Activated CD8-positive, alpha-beta T cell treated with anti-CD3 and anti-CD28 coated beads for 36 hours (primary cell): ENCODE measurements at regions of chr22 and their contacts with region 1.

Region 1: GRCh38 chr22:23281406-23282088 is 101.2 kb downstream of the BCR start:
- DNase-seq: peak; percentile 89
- ATAC-seq: peak; percentile 86
- H3K4me3 Mint-ChIP-seq: no peak overlapping the region
- H3K27ac Mint-ChIP-seq: no peak overlapping the region
- H3K4me1 Mint-ChIP-seq: peaks cover 32% of the 10 kb centered on the region
- H3K27me3 Mint-ChIP-seq: no peaks in the 10 kb centered on the region
- CTCF ChIP-seq: peak; percentile 94

Region 2: DNA sequence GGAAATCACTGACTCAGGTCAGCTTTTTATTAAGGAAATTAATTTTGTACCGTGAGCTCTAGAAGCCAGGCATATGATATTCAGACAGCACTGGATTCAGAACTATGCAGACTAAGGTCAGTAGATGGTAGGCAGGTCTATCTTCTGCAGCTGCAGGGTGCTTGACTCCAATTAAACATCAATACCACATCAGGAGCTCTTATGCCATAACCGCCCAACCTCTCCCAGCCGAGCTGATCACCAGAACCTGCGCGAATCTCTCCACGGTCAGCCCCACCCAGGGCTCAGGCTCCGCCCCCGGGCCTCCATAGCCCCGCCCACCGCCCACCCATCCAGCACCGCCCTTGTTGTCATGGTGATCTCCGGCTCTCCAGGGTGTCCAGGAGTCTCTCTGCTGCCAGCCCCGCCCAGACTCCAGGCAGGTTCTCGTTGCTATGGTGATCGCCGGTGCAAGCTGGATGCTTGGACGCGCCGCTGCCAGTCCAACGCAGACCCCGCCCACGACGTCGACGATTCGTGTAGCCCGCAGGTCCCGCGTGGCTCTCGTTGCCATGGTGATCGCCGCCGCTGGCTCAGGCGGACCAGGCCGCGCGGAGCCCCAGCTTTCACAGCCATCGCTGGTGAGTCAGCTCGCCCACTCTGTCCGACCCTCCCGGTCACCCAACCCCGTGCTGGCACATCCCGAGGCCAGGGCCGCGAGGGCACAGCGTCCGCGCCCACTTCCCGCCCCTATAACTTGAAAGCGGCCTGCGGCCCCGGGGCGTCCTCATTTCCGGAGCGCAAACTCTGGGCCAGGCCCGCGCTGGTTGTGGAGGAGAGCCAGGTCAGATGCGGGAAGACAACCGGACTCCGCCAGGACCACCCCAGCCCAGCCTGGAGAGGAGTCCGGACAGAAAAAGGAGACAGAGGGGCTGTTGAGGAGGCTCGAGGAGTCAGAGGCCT is 136.3 kb before region 1 on chr22 and contains the start of gene RAB36:
- CTCF ChIA-PET with region 1: interaction called, 10 read pairs
- POLR2A ChIA-PET with region 1: no interaction called
- intact Hi-C with region 1: no loop called
- DNase-seq: peak; percentile 90
- ATAC-seq: peak; percentile 49
- H3K4me3 Mint-ChIP-seq: peak within 1 kb of the TSS; percentile 61
- H3K27ac Mint-ChIP-seq: no peak within 1 kb of the TSS
- H3K4me1 Mint-ChIP-seq: peaks cover 43% of the 10 kb centered on the region
- H3K27me3 Mint-ChIP-seq: no peaks in the 10 kb centered on the region
- CTCF ChIP-seq: no peak
- total RNA-seq, gene RAB36: 0.20 to 0.22 TPM

Region 3: DNA sequence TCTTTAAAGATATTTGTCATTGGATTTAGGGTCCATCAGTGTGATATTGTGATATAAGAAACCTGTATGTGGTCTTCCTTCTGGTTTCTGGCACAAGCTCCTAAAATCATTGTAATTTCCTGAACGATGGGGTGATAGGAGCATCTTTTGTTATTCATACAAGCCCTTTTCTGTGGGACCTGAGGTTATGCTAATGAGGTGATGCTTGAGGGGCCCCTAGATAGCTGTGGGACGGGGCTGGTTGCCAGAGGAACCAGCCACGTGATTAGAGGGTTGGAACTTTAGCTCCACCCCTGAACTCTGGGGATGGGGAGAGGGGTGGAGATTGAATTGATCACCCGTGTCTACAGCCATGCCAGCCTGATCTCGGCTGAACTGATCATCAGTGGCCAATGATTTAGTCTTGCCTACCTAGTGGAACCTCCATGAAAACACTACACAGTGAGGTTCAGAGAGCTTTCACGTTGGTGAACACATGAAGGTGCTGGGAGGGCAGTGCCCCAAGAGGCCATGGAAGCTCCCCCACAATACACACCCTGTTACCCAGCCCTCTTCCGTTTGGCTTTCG is 38.5 kb before region 1 on chr22:
- CTCF ChIA-PET with region 1: interaction called, 17 read pairs
- POLR2A ChIA-PET with region 1: no interaction called
- intact Hi-C with region 1: no loop called
- DNase-seq: peak; percentile 87
- ATAC-seq: peak; percentile 96
- H3K4me3 Mint-ChIP-seq: peak overlapping the region; percentile 65
- H3K27ac Mint-ChIP-seq: peak overlapping the region; percentile 81
- H3K4me1 Mint-ChIP-seq: peaks cover 85% of the 10 kb centered on the region
- H3K27me3 Mint-ChIP-seq: no peaks in the 10 kb centered on the region
- CTCF ChIP-seq: no peak

Region 4: GRCh38 chr22:23248583-23248982 is 33.0 kb before region 1 on chr22:
- CTCF ChIA-PET with region 1: interaction called, 17 read pairs
- POLR2A ChIA-PET with region 1: no interaction called
- intact Hi-C with region 1: no loop called
- DNase-seq: no peak
- ATAC-seq: no peak
- H3K4me3 Mint-ChIP-seq: no peak overlapping the region
- H3K27ac Mint-ChIP-seq: no peak overlapping the region
- H3K4me1 Mint-ChIP-seq: peaks cover 69% of the 10 kb centered on the region
- H3K27me3 Mint-ChIP-seq: no peaks in the 10 kb centered on the region
- CTCF ChIP-seq: no peak